Ovary (tissue), 10 donors: ENCODE measurements at regions of chr13 and their contacts with region 1.

Region 1: GRCh38 chr13:78054157-78054556 is 135.5 kb upstream of the EDNRB start:
- DNase-seq: no peak
- H3K4me3 ChIP-seq: no peak overlapping the region
- H3K27ac ChIP-seq: no peak overlapping the region
- H3K4me1 ChIP-seq: no peaks in the 10 kb centered on the region
- H3K27me3 ChIP-seq: no peaks in the 10 kb centered on the region
- CTCF ChIP-seq: no peak
- EP300 ChIP-seq: no peak
- POLR2A ChIP-seq: no peak

Region 2: GRCh38 chr13:76503766-76504165 is 1550.4 kb before region 1 on chr13:
- intact Hi-C with region 1: loop called in 1 of 4 experiments (anchors 10 kb)
- DNase-seq: no peak
- H3K4me3 ChIP-seq: no peak overlapping the region
- H3K27ac ChIP-seq: no peak overlapping the region
- H3K4me1 ChIP-seq: peaks cover 1% of the 10 kb centered on the region
- H3K27me3 ChIP-seq: no peaks in the 10 kb centered on the region
- CTCF ChIP-seq: no peak
- EP300 ChIP-seq: no peak
- POLR2A ChIP-seq: no peak

Region 3: GRCh38 chr13:77516342-77516789 is 537.8 kb before region 1 on chr13:
- intact Hi-C with region 1: no loop called
- DNase-seq: no peak
- H3K4me3 ChIP-seq: no peak overlapping the region
- H3K27ac ChIP-seq: no peak overlapping the region
- H3K4me1 ChIP-seq: no peaks in the 10 kb centered on the region
- H3K27me3 ChIP-seq: no peaks in the 10 kb centered on the region
- CTCF ChIP-seq: no peak
- EP300 ChIP-seq: no peak
- POLR2A ChIP-seq: no peak

Region 4: GRCh38 chr13:79398915-79399314 is 1344.8 kb after region 1 on chr13:
- intact Hi-C with region 1: loop called in 1 of 4 experiments (anchors 5 kb)
- DNase-seq: no peak
- H3K4me3 ChIP-seq: no peak overlapping the region
- H3K27ac ChIP-seq: no peak overlapping the region
- H3K4me1 ChIP-seq: peaks cover 4% of the 10 kb centered on the region
- H3K27me3 ChIP-seq: no peaks in the 10 kb centered on the region
- CTCF ChIP-seq: no peak
- EP300 ChIP-seq: no peak
- POLR2A ChIP-seq: no peak